AG04449 (cell line): ENCODE measurements at regions of chrX and their contacts with region 1.

Region 1: DNA sequence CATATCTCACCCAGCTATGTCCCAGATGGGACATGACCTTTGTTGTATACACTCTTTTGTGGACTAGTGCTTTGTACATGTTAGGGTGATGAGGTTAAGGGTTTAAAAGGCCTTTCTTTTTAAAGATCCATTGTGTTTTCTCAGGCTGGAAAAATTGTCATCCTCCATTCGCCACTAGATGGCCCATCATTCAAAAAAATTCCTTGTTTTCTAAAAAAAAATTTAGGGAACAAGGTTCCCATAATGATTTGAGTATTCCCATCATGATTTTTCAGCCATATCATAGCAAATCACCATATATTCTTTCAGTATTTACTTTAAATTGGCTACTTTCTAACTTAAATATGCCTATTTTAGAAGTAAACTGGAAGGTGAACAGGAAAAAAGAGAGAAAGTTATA is 91.9 kb upstream of the TMEM164 start:
- DNase-seq: no peak
- H3K4me3 ChIP-seq: no peak overlapping the region
- CTCF ChIP-seq: no peak

Region 2: GRCh38 chrX:109751698-109752097 is 159.3 kb before region 1 on chrX:
- CTCF ChIA-PET with region 1: no interaction called
- POLR2A ChIA-PET with region 1: no interaction called
- DNase-seq: no peak
- H3K4me3 ChIP-seq: no peak overlapping the region
- CTCF ChIP-seq: no peak

Region 3: GRCh38 chrX:110125446-110126162 is 214.6 kb after region 1 on chrX:
- CTCF ChIA-PET with region 1: interaction called, 29 read pairs
- POLR2A ChIA-PET with region 1: no interaction called
- DNase-seq: no peak
- H3K4me3 ChIP-seq: no peak overlapping the region
- CTCF ChIP-seq: peak; percentile 17